OCI-LY7 (cell line): ENCODE measurements at regions of chr12 and their contacts with region 1.

Region 1: DNA sequence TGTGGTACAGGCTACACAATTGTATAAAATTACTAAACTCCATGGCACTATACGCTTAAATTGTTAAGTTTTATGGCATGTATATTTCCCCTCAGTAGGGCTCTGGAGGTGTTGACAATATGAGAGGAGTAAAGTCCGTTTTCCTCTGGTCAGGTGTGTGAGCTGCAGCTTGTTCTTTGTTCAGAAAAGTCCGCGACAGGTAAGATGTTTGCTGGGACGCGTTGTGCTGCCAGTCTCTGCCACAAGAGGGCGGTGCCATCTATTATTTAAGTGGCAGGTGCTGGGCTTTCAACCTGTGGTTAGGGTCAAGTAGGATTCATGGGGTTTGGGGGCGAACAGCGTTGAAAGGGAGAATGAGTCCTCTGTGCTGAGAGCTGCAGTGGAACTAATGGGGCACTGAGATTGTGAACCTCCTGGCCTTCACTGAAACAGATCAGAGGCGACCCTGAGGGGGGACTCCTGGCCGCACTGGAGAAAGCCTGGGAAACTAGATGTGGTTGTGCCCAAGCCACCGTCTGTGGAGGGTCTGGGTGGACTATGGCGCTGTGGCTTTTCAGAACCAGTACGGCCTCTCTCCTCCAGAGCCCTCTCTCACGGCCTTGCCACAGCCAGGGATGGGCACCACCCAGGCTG is 179.0 kb downstream of the SLC15A4 start:
- DNase-seq: peak; percentile 60
- H3K4me3 ChIP-seq: no peak overlapping the region
- H3K27ac ChIP-seq: no peak overlapping the region
- H3K4me1 ChIP-seq: no peaks in the 10 kb centered on the region
- CTCF ChIP-seq: peak; percentile 92

Region 2: GRCh38 chr12:127650626-127651025 is 994.2 kb before region 1 on chr12:
- CTCF ChIA-PET with region 1: no interaction called
- POLR2A ChIA-PET with region 1: no interaction called
- intact Hi-C with region 1: no loop called
- DNase-seq: no peak
- H3K4me3 ChIP-seq: no peak overlapping the region
- H3K27ac ChIP-seq: no peak overlapping the region
- H3K4me1 ChIP-seq: no peaks in the 10 kb centered on the region
- CTCF ChIP-seq: no peak

Region 3: GRCh38 chr12:128394137-128394536 is 250.6 kb before region 1 on chr12:
- CTCF ChIA-PET with region 1: no interaction called
- POLR2A ChIA-PET with region 1: no interaction called
- intact Hi-C with region 1: no loop called
- DNase-seq: no peak
- H3K4me3 ChIP-seq: no peak overlapping the region
- H3K27ac ChIP-seq: no peak overlapping the region
- H3K4me1 ChIP-seq: no peaks in the 10 kb centered on the region
- CTCF ChIP-seq: no peak

Region 4: GRCh38 chr12:128531170-128531569 is 113.6 kb before region 1 on chr12:
- CTCF ChIA-PET with region 1: no interaction called
- POLR2A ChIA-PET with region 1: no interaction called
- intact Hi-C with region 1: loop called (anchors 2 kb)
- DNase-seq: peak; percentile 65
- H3K4me3 ChIP-seq: no peak overlapping the region
- H3K27ac ChIP-seq: no peak overlapping the region
- H3K4me1 ChIP-seq: peaks cover 20% of the 10 kb centered on the region
- CTCF ChIP-seq: peak; percentile 84

Region 5: DNA sequence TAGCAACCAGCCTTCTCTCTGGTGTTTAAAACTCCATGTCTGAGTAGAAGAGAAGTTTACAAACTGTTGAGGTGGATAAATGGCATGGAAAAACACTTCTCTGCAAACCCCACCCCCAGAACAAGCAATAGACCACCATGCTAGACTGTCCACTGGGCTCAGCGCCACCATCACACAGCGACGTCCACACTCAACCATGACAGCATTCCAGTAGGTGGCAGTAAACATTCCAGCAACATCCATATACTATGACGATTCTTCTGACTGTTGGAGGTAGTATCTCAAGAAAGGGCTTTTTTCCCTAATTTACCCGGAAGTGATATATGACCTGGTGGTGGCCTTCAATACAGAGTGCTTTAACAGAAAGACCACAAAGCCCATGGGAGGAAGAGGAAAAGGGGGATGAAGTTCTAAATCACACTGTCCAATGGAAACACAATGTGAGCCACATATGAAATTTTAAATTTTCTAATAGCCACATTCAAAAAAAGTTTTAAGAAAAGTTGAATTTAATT is 26.8 kb after region 1 on chr12:
- CTCF ChIA-PET with region 1: no interaction called
- POLR2A ChIA-PET with region 1: no interaction called
- intact Hi-C with region 1: no loop called
- DNase-seq: no peak
- H3K4me3 ChIP-seq: no peak overlapping the region
- H3K27ac ChIP-seq: no peak overlapping the region
- H3K4me1 ChIP-seq: no peaks in the 10 kb centered on the region
- CTCF ChIP-seq: peak; percentile 66

Region 6: GRCh38 chr12:128891856-128892255 is 247.1 kb after region 1 on chr12:
- CTCF ChIA-PET with region 1: no interaction called
- POLR2A ChIA-PET with region 1: no interaction called
- intact Hi-C with region 1: no loop called
- DNase-seq: no peak
- H3K4me3 ChIP-seq: no peak overlapping the region
- H3K27ac ChIP-seq: no peak overlapping the region
- H3K4me1 ChIP-seq: no peaks in the 10 kb centered on the region
- CTCF ChIP-seq: no peak